Motor neuron (in vitro differentiated cells): ENCODE measurements at regions of chr17 and their contacts with region 1.

Region 1: DNA sequence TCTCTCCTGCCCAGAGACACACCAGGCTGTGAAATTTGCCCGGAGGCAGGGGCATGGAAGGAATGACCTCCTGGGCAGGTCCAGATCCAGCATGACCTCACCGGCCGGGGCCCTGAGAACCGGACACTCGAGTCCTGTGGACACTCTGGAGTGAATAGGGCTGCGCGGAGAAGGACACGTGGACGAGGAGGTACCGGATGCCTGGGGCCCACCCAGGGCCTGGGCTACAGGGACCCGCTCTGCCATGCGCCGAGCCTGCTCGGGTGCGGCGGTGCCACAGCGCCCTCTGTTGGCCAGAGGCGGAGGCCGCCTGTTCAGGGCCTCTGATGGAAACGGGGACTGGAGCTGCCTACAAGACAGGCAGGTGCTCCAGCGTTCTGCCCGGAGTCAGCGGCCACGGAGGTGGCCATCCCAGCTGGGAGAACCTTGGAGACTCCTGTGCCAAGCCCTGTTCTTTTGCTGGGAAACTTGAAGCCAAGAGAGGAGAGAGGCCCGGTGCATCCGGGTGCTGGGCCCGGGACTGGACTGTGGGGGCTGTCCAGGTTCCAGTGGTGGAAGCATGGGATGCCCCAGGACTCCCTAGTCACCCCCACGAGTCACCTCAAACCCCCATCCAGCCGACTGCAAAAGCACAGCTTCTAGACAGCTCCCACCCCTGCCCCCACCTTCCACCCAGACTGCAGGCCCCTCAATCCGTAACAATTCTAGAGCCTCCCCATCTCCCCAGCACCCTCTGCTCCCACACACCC is 19.3 kb upstream of the NXPH3 start:
- ATAC-seq: peak; percentile 83 to 98 (median 93)
- H3K4me3 ChIP-seq: no peak overlapping the region
- H3K27ac ChIP-seq: no peak overlapping the region
- H3K4me1 ChIP-seq: peaks cover 3% of the 10 kb centered on the region in 2 donors

Region 2: DNA sequence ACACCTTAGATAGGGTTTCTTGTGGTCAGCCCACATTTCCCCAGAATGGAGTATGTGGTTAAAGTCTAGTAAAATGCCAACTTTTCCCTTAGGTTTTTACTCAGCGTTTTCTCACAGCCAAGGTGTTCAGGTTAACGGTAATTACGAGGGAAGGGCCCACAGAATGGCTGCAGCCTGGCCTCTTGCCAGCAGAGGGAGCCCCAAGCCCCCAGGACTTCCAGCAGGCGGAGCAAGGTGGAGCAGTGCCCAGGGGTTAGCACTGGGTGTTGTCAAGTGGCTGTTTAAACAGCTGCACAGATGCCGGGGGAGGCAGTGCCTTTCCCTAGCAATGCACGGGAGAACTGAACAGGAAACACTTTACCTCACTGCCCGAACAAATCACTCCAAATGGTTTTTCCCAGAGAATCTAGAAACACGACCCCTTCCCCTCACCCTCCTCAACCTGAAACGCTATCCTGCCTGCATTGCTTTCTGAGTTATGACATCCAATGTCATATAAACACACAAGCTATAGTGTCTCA is 148.4 kb before region 1 on chr17:
- in situ Hi-C with region 1: loop called in 5 of 9 experiments (anchors 10 to 25 kb)
- ATAC-seq: peak; percentile 86 to 100 (median 98)
- H3K4me3 ChIP-seq: no peak overlapping the region
- H3K27ac ChIP-seq: no peak overlapping the region
- H3K4me1 ChIP-seq: no peaks in the 10 kb centered on the region

Region 3: GRCh38 chr17:49414622-49415350 is 141.6 kb before region 1 on chr17 and contains the start of gene PHB1:
- in situ Hi-C with region 1: loop called in 5 of 9 experiments (anchors 10 to 25 kb)
- ATAC-seq: peak; percentile 97 to 99 (median 99)
- H3K4me3 ChIP-seq: peak within 1 kb of the TSS; percentile 62 to 87 (median 76)
- H3K27ac ChIP-seq: peak within 1 kb of the TSS in 1 of 2 donors; percentile 13
- H3K4me1 ChIP-seq: peaks cover 0 to 5% of the 10 kb centered on the region in 2 donors
- total RNA-seq, gene PHB1: 63.4 to 196 (median 97.5) TPM

Region 4: DNA sequence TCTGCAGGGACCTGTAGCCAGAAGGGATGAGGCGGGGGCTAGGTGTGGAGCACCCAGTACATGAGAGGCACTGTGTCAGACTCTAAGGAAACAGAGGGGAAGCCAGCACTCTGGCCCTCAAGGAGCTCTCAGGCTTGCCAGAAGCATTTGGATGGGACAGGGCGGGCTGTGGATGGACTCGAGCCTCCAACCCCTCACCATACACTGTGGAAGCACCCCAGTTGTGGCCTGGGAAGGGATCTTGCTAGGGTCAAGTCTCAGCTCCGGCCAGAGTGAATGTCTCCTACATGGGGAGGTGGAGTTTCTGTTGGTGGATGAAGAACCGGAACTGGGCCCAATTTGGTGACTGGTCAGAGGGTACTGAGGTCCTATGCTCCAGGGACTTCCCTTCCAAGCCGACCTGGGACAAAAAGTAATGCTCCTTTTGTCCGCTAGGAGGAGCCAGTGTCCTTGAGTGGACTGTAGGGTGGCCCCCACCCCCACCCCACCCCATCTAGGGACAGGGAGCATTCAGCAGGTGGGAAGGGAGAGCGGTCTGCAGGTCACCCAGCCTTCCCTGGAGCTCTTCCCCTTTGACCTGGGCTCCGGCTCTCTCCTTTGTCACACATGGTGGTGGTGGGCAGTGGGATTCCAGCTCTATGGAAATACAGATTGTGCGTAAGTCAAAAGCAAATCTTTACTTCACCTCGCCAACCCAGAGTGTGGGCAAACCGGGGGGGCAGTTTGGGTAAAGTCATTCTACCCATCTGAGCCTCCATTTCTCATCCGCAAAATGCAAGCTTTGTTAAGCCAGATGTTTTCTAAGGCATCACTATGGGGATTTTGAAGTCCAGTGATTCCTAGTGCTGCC is 121.4 kb before region 1 on chr17:
- in situ Hi-C with region 1: loop called in 3 of 9 experiments (anchors 5 to 25 kb)
- ATAC-seq: peak in 4 of 8 experiments; percentile 28 to 91 (median 71)
- H3K4me3 ChIP-seq: peak overlapping the region in 1 of 5 donors; percentile 8
- H3K27ac ChIP-seq: no peak overlapping the region
- H3K4me1 ChIP-seq: peaks cover 42 to 47% of the 10 kb centered on the region in 2 donors

Region 5: GRCh38 chr17:49496183-49496866 is 60.1 kb before region 1 on chr17:
- in situ Hi-C with region 1: loop called in 1 of 9 experiments (anchors 10 kb)
- ATAC-seq: peak; percentile 62 to 84 (median 68)
- H3K4me3 ChIP-seq: peak overlapping the region; percentile 69 to 99 (median 85)
- H3K27ac ChIP-seq: peak overlapping the region; percentile 82 to 83
- H3K4me1 ChIP-seq: peaks cover 28 to 35% of the 10 kb centered on the region in 2 donors